HAP-1 (cell line): ENCODE measurements at regions of chr16 and their contacts with region 1.

Region 1: GRCh38 chr16:3023669-3024478 is at the starts of genes HCFC1R1 and THOC6:
- DNase-seq: peak; percentile 97 to 98
- H3K4me3 ChIP-seq: peak within 1 kb of the TSS; percentile 90
- H3K4me1 ChIP-seq: peaks cover 25% of the 10 kb centered on the region
- H3K27me3 ChIP-seq: peaks cover 4% of the 10 kb centered on the region

Region 2: DNA sequence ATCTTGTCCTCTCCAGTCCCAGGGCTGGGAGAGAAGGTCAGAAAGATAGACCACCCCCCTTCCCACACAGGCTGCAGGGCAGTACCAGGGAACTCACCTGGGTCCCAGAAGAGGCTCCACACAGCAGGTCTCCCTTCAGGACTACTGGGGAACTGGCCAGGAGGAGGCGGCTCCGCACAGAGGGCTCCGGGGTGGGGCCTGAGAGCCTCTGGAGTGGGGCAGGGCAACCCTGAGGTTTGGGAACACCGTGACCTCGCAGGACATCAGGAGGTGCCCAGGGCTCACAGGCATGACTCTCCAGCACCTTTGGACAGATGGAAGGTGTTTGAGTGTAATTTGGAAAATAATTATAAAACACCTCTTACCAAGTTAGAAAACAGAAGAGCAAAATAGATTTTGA is 694.3 kb before region 1 on chr16:
- in situ Hi-C with region 1: no loop called
- DNase-seq: no peak
- H3K4me3 ChIP-seq: no peak overlapping the region
- H3K4me1 ChIP-seq: no peaks in the 10 kb centered on the region
- H3K27me3 ChIP-seq: no peaks in the 10 kb centered on the region

Region 3: GRCh38 chr16:2969545-2970521 is 54.0 kb before region 1 on chr16:
- in situ Hi-C with region 1: loop called (anchors 5 kb)
- DNase-seq: peak; percentile 59 to 85
- H3K4me3 ChIP-seq: peak overlapping the region; percentile 93
- H3K4me1 ChIP-seq: peaks cover 21% of the 10 kb centered on the region
- H3K27me3 ChIP-seq: no peaks in the 10 kb centered on the region

Region 4: DNA sequence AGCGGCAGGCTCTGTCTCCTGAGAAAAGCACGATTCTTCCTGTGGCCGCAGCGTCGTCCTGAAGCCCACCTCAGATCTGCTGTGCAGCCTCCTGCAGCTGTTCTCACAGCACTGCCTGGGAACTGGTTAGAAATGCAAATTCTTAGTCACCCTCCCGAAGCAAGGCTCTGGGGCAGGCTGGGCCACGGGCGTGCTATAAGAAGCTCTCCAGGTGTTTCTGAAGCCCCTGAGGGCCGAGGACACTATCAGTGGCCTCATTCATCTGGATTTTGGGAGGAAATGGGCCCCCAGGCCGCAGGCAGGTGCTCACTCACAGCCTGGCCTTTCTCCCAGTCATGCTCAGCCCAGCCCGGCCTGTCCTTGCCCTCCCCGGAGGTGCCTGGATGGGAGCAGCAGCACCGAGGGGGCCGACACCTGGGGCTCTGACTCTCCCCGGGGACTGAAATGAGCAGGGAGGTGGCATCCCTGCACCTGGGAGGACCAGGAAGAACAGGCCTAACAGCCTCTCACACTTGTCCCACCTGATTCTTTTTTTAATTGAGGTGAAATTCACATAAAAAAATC is 563.8 kb after region 1 on chr16:
- in situ Hi-C with region 1: no loop called
- DNase-seq: no peak
- H3K4me3 ChIP-seq: no peak overlapping the region
- H3K4me1 ChIP-seq: no peaks in the 10 kb centered on the region
- H3K27me3 ChIP-seq: no peaks in the 10 kb centered on the region

Region 5: DNA sequence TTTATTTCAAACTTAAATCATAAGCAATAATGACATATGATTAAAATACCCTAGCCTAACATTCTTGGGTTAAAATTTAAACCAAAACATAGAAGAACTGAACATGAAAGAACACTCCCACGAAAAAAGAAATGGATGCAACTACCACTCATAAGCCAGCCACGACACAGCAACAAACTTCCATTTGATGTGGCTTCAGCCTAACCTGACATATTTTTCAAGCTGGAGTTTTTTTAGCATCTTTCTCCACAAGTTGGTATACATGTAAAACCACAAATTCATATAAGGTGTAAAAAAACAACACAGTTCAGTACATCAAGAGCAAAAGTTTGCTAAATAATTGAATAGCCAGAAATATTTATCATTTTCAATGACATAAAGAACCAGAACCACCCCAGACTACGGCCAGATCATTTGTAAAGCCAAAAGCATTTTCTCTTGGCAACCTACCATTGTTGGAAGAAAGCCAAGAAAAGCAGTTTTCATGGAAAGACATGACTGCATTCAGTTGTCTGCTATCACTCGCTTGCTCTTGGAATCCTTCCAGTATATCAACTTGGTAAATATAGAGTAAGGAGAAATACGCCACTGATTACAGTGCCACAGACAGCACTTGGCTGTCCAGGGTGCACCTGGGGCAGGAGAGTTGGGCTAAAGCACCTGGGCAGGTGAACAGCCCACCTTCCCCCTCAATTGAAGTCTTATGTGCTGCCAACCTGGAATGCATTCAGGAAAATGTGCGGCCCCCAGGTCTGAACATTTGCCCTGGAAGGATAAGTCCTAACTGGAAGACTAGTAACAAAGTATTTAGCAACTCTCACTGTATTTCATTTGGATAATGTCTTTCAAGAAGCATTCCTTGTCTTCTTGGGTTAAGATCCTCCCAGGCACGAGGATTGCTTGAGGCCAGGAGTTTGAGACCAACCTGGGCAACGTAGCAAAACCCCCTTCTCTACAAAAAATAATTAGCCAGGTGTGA is 796.2 kb after region 1 on chr16:
- in situ Hi-C with region 1: no loop called
- DNase-seq: no peak
- H3K4me3 ChIP-seq: no peak overlapping the region
- H3K4me1 ChIP-seq: peaks cover 19% of the 10 kb centered on the region
- H3K27me3 ChIP-seq: no peaks in the 10 kb centered on the region